Aorta (tissue), 5 donors: ENCODE measurements at regions of chr3 and their contacts with region 1.

Region 1: GRCh38 chr3:16511681-16512434 is 1.6 kb downstream of the RFTN1 start:
- DNase-seq: peak; percentile 86
- ATAC-seq: peak; percentile 63
- H3K4me3 ChIP-seq: peak overlapping the region; percentile 52 to 85
- H3K27ac ChIP-seq: peak overlapping the region; percentile 10 to 56
- H3K4me1 ChIP-seq: peaks cover 2 to 4% of the 10 kb centered on the region in 2 donors
- H3K27me3 ChIP-seq: no peaks in the 10 kb centered on the region

Region 2: DNA sequence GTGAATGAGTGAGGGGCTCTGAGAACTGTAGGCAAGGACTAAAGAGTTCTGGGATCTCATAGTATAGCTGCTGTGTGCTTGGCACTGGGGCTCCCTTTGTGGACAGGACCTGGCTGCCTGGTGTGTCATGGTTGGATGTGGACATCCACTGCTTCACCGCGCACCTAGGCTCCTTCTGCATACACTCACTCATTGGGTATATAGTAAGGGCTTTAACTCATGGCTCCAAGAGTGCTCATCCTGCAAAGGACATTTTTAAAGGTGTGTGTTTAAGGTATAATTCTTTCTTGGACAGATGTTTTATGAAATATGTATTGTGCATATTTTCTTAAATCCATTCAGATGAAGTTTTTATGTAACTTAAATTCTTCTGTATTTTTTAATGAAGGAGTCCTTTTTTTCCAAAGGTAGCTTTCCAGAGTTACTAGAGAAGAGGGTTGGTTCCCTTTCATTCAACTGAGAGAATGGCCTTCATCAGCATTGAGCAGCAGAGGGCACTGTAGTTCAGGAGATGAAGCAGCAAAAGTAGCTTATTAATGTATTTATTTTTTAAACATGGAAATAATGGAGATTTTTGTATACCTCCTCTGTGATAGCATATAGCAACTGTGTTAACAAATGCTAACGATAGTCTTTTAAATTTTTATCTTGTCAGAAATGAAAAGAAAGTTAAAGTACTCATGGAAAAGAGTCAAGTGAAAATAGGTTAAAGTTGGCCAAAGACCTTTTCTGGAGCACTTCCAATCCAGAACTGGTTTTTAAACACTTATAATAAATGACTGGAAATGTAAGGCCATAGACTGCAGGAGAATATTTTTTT is 221.6 kb before region 1 on chr3:
- intact Hi-C with region 1: loop called in 1 of 2 experiments (anchors 10 kb)
- DNase-seq: peak in 1 of 2 donors; percentile 51
- ATAC-seq: peak; percentile 77
- H3K4me3 ChIP-seq: no peak overlapping the region
- H3K27ac ChIP-seq: no peak overlapping the region
- H3K4me1 ChIP-seq: no peaks in the 10 kb centered on the region
- H3K27me3 ChIP-seq: no peaks in the 10 kb centered on the region

Region 3: GRCh38 chr3:16338999-16339398 is 172.9 kb before region 1 on chr3:
- intact Hi-C with region 1: loop called (anchors 10 kb)
- DNase-seq: no peak
- ATAC-seq: peak; percentile 67
- H3K4me3 ChIP-seq: no peak overlapping the region
- H3K27ac ChIP-seq: peak overlapping the region in 1 of 2 donors; percentile 7
- H3K4me1 ChIP-seq: peaks cover 0 to 4% of the 10 kb centered on the region in 2 donors
- H3K27me3 ChIP-seq: no peaks in the 10 kb centered on the region

Region 4: DNA sequence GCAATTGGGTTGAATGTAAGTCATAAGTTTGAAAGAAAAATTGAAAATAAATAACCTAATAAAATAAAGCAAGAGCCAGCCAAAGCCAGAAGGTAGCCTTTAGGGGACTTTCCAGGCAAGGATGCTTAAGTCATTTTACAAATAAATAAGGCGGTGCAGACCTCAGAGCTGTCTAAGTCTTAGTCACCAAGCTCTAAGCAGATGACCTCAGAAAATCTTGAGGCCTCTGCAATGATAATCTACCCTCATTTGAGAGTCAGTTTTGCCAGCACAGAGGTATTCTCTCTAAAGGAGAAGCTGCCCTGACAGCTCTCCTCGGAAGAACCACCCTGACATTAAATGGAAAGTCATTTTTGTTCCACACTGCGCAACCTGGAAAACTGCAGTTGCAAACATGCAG is 132.9 kb before region 1 on chr3:
- intact Hi-C with region 1: loop called in 1 of 2 experiments (anchors 10 kb)
- DNase-seq: no peak
- ATAC-seq: no peak
- H3K4me3 ChIP-seq: no peak overlapping the region
- H3K27ac ChIP-seq: no peak overlapping the region
- H3K4me1 ChIP-seq: no peaks in the 10 kb centered on the region
- H3K27me3 ChIP-seq: no peaks in the 10 kb centered on the region

Region 5: DNA sequence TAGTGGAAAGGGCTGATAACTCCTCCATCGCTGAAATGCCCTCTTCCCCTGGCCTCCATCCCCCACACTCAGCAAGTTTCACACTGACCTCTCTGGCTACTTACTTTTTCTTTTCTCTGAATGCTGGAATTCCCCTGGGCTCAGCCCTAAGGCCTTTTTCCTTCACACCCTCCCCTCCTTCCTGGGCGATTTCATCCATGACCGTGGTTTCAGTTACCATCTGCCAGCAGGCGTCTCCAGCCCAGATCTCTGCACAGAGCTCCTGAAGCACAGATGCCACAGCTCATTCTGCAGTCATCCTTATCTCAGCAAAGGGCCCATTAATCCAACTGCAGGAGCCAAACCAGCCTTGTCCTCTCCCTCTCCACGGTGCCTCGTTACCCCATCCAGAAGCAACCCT is 112.4 kb before region 1 on chr3:
- intact Hi-C with region 1: no loop called
- DNase-seq: no peak
- ATAC-seq: peak; percentile 62
- H3K4me3 ChIP-seq: no peak overlapping the region
- H3K27ac ChIP-seq: peak overlapping the region in 1 of 2 donors; percentile 69
- H3K4me1 ChIP-seq: peaks cover 0 to 3% of the 10 kb centered on the region in 2 donors
- H3K27me3 ChIP-seq: no peaks in the 10 kb centered on the region

Region 6: GRCh38 chr3:16448639-16449070 is 63.2 kb before region 1 on chr3:
- intact Hi-C with region 1: loop called in 1 of 2 experiments (anchors 5 kb)
- DNase-seq: peak; percentile 92 to 94
- ATAC-seq: peak; percentile 86
- H3K4me3 ChIP-seq: no peak overlapping the region
- H3K27ac ChIP-seq: peak overlapping the region in 1 of 2 donors; percentile 40
- H3K4me1 ChIP-seq: peaks cover 8 to 13% of the 10 kb centered on the region in 2 donors
- H3K27me3 ChIP-seq: no peaks in the 10 kb centered on the region

Region 7: DNA sequence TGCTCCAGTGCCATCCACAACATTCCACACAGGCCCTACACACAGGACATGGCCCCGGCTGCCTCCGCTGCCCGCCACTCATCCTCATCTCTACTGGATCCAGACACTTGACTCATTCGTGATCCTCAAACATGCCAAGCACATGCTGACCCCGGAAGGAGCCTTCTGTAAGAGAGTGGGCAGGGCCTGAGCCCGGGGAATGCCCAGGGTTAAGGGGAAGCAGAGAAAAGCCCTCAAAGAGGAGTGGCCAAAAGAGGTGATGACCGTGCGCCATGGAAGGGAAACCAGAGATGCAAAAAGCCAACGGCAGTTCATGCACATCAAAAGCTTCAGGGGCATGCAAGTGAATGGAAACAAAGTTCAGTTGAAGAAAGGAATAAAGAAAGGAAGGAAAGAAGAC is 44.5 kb before region 1 on chr3:
- intact Hi-C with region 1: loop called (anchors 5 kb)
- DNase-seq: peak in 1 of 2 donors; percentile 57
- ATAC-seq: no peak
- H3K4me3 ChIP-seq: no peak overlapping the region
- H3K27ac ChIP-seq: peak overlapping the region in 1 of 2 donors; percentile 7
- H3K4me1 ChIP-seq: peaks cover 11 to 13% of the 10 kb centered on the region in 2 donors
- H3K27me3 ChIP-seq: no peaks in the 10 kb centered on the region

Region 8: GRCh38 chr3:16697443-16698147 is 185.7 kb after region 1 on chr3:
- intact Hi-C with region 1: no loop called
- DNase-seq: no peak
- ATAC-seq: no peak
- H3K4me3 ChIP-seq: no peak overlapping the region
- H3K27ac ChIP-seq: no peak overlapping the region
- H3K4me1 ChIP-seq: peaks cover 0 to 2% of the 10 kb centered on the region in 2 donors
- H3K27me3 ChIP-seq: no peaks in the 10 kb centered on the region